Ascending aorta (tissue), 2 donors: ENCODE measurements at regions of chr10 and their contacts with region 1.

Region 1: GRCh38 chr10:131900350-131901146 is at the start of gene PPP2R2D:
- DNase-seq: peak; percentile 66 to 95
- H3K4me3 ChIP-seq: peak within 1 kb of the TSS; percentile 85 to 98
- H3K27ac ChIP-seq: peak within 1 kb of the TSS; percentile 84 to 95
- H3K4me1 ChIP-seq: peaks cover 0 to 18% of the 10 kb centered on the region in 2 donors
- H3K27me3 ChIP-seq: no peaks in the 10 kb centered on the region
- CTCF ChIP-seq: no peak
- total RNA-seq, gene PPP2R2D: 11.8 TPM

Region 2: DNA sequence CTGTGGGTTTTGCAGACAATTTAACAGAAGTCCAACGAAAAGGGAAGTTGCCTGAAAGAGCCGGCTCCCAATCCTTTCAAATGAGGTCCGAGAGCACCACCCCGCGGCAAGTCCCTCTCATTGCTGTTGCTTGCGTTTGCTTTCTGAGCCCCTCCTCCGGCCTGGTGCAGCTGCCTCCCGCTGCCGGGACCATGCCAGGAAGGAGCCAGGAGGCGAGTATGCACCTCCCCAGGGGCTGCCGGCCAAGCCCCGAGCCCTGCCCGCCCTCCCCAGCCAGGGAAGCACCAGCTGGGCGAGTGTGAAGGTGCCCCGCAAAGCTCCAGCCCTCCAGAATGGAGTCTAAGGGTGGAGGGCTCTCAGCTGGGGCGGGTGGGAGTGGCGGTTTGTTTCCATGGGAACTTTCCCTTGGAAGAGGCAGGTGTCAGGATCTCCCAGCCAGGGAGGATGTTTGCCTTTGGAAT is 25.5 kb before region 1 on chr10:
- intact Hi-C with region 1: no loop called
- DNase-seq: no peak
- H3K4me3 ChIP-seq: no peak overlapping the region
- H3K27ac ChIP-seq: no peak overlapping the region
- H3K4me1 ChIP-seq: no peaks in the 10 kb centered on the region
- H3K27me3 ChIP-seq: no peaks in the 10 kb centered on the region
- CTCF ChIP-seq: peak in 1 of 3 experiments; percentile 49

Region 3: DNA sequence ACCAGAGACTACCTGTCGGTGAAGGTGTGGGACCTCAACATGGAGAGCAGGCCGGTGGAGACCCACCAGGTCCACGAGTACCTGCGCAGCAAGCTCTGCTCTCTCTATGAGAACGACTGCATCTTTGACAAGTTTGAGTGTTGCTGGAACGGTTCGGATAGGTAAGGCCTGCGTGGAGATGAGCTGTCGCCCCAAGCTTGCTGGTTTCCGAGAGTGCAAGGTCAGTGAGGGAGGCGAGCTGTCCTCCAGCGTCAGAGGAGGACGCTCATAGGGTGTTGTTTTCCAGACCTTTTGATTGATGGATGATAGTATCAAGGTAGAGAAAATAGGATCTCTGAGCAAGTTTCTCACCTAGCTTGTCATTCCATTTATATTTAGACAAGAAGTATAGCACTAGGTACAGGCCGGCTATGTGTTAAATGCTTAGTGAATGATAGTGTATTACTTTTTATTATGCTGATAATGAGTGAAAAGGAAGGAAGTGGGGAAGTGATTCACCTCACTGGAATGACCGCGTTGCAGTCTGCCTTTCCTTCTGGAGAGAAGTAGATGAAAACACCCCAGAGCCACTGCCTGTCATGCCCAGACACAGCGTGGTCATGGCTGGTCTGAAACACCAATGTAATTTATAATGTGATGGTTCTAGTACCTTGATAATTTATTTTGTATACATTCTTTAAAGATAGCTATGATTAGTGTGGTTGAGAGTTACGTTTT is 47.2 kb after region 1 on chr10:
- intact Hi-C with region 1: loop called (anchors 1 kb)
- DNase-seq: peak in 1 of 2 donors; percentile 42
- H3K4me3 ChIP-seq: no peak overlapping the region
- H3K27ac ChIP-seq: no peak overlapping the region
- H3K4me1 ChIP-seq: peaks cover 4 to 21% of the 10 kb centered on the region in 2 donors
- H3K27me3 ChIP-seq: no peaks in the 10 kb centered on the region
- CTCF ChIP-seq: no peak

Region 4: GRCh38 chr10:131981429-131982184 is 81.1 kb after region 1 on chr10 and contains the start of gene BNIP3:
- intact Hi-C with region 1: loop called (anchors 1 kb)
- DNase-seq: peak; percentile 82 to 96
- H3K4me3 ChIP-seq: peak within 1 kb of the TSS; percentile 92 to 99
- H3K27ac ChIP-seq: peak within 1 kb of the TSS; percentile 48 to 67
- H3K4me1 ChIP-seq: peaks cover 6 to 11% of the 10 kb centered on the region in 2 donors
- H3K27me3 ChIP-seq: no peaks in the 10 kb centered on the region
- CTCF ChIP-seq: peak in 2 of 3 experiments; percentile 6 to 9
- total RNA-seq, gene BNIP3: 18.3 TPM

Region 5: DNA sequence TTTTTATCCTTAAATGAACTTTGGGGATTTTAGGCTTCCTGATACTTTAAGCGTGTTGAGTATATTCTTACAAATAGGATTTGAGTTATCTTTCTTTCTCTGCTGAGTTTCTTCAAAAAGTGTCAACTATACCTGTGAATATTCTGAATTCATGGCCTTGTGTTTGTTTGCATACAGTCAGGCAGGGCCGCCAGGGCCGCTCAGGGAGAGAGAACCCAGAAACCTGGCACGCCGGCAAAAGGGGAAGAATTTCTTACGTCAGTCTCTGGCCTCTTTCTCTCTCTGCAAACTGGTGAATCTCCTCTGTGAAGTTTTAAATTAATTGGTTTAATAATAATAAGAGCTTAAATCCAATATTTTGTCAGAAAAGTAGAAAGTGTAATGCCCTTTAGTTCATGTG is 110.5 kb after region 1 on chr10:
- intact Hi-C with region 1: no loop called
- DNase-seq: no peak
- H3K4me3 ChIP-seq: no peak overlapping the region
- H3K27ac ChIP-seq: no peak overlapping the region
- H3K4me1 ChIP-seq: no peaks in the 10 kb centered on the region
- H3K27me3 ChIP-seq: no peaks in the 10 kb centered on the region
- CTCF ChIP-seq: no peak

Region 6: DNA sequence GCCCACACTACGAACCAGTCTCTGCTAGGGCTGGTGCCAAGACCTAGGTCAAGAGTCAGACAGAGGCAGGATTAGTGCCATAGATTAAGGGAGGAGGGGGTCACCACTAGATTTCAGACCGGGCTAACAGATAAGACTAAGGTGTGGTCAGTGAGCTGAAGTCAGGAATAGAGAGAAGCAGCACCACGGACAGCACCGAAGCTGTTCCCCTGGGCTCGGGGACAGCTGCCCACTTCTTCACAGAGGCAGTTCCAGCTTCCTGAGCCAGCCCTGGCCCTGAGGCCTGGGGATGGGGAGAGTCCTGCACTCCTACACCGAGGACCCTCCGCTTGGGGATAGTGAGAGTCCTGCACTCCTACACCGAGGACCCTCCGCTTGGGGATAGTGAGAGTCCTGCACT is 154.0 kb after region 1 on chr10:
- intact Hi-C with region 1: no loop called
- DNase-seq: no peak
- H3K4me3 ChIP-seq: no peak overlapping the region
- H3K27ac ChIP-seq: no peak overlapping the region
- H3K4me1 ChIP-seq: no peaks in the 10 kb centered on the region
- H3K27me3 ChIP-seq: no peaks in the 10 kb centered on the region
- CTCF ChIP-seq: no peak

Region 7: DNA sequence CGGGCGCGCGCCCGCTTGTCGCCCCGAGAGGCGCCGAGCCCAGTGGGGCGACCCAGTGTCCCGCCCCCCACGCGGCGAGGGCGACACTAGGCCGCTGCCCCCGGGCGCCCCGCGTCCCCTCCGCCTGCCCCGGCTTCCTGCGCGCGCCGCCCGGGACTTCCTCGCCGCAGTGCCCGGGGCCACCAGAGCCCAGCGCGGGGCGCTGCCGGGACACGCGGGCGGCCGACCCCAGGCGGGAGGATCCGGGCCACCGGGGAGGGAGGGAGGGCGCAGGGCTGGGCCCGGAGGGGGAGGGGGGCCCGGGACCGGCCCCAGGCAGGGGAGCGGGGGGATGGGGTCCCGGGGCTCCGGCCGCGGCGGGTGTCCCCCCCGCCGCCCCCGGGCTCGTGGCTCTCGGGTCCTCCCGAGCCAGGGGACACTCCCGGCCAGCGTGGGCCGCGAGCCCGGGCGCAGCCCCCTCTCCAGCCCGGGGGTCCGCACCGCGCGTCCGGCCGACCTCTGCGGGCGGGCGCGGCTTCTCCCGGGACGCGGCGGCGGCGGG is 496.0 kb after region 1 on chr10:
- intact Hi-C with region 1: loop called (anchors 1 kb)
- DNase-seq: peak in 1 of 2 donors; percentile 81
- H3K4me3 ChIP-seq: peak overlapping the region; percentile 74 to 90
- H3K27ac ChIP-seq: peak overlapping the region; percentile 91 to 95
- H3K4me1 ChIP-seq: peaks cover 3 to 26% of the 10 kb centered on the region in 2 donors
- H3K27me3 ChIP-seq: no peaks in the 10 kb centered on the region
- CTCF ChIP-seq: peak; percentile 13 to 53 (median 32)

Region 8: DNA sequence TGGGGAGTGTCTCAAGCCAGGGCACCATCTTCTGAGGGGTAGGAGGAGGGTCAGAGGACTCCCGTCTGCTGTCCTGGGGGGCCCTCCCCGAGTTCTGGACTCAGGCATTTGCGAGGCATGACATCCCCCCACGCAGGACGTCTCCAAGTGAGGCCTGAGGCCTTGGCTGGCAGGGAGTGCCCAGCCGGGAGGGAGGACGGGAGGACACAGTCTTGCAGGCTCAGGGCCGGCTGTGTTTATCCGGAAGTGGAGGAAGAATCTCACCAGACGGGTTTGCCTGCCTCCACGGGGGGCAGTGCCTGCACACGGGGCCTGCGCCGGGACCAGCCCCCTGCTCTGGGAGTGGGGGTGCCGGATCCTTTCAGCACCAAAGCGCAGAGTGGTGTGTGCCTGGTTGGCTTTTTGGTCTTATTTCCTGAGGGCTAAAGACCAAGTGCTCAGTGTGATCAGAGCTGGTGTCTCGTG is 507.3 kb after region 1 on chr10:
- intact Hi-C with region 1: no loop called
- DNase-seq: no peak
- H3K4me3 ChIP-seq: no peak overlapping the region
- H3K27ac ChIP-seq: no peak overlapping the region
- H3K4me1 ChIP-seq: peaks cover 0 to 10% of the 10 kb centered on the region in 2 donors
- H3K27me3 ChIP-seq: no peaks in the 10 kb centered on the region
- CTCF ChIP-seq: no peak

Region 9: GRCh38 chr10:133378251-133379096 is 1477.9 kb after region 1 on chr10:
- intact Hi-C with region 1: loop called (anchors 5 kb)
- DNase-seq: peak in 1 of 2 donors; percentile 79
- H3K4me3 ChIP-seq: peak overlapping the region; percentile 87 to 98
- H3K27ac ChIP-seq: peak overlapping the region; percentile 61 to 82
- H3K4me1 ChIP-seq: peaks cover 4 to 13% of the 10 kb centered on the region in 2 donors
- H3K27me3 ChIP-seq: no peaks in the 10 kb centered on the region
- CTCF ChIP-seq: no peak